ENCODE measurements at regions of chr12 and their contacts with region 1.

Region 1: DNA sequence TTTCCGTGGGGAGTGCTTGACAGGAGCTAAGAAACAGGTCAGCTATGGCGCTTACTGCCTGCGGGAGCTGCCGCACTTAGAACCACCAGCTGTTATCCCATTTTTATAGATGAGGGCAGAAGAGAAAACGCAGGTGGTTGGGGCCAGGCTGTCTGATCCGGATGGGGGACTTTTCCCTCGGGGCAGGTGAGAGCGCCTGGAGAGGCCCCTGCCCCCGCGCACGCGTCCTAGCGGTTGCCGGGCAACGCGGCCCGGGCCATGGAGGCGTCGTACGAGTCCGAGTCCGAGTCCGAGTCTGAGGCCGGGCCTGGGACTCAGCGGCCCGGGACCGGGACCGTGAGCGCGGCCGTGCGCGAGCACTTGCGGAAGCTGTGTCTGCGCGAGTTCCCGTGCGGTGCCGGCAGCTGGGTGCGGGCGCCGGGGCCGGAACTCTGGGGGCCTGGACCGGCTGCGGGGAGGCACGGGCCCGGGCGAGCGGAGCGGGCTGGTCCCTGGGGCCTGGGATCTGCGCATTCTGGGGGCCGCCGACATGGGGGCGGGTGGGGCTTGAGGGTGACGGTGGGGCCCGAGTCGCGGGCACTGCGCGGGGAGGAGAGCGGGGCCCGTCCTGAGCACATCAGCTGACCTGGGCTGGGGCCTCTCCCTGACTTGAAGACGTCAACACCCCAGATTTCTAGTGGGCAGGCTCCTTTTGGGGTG is at the start of gene LRRC43:
- DNase-seq: peak; percentile 42
- ATAC-seq: peak; percentile 65
- H3K4me3 Mint-ChIP-seq: peak within 1 kb of the TSS; percentile 68
- H3K27ac Mint-ChIP-seq: no peak within 1 kb of the TSS
- H3K4me1 Mint-ChIP-seq: peaks cover 10% of the 10 kb centered on the region
- H3K27me3 Mint-ChIP-seq: peaks cover 9% of the 10 kb centered on the region
- CTCF ChIP-seq: no peak
- total RNA-seq, gene LRRC43: not detected

Region 2: DNA sequence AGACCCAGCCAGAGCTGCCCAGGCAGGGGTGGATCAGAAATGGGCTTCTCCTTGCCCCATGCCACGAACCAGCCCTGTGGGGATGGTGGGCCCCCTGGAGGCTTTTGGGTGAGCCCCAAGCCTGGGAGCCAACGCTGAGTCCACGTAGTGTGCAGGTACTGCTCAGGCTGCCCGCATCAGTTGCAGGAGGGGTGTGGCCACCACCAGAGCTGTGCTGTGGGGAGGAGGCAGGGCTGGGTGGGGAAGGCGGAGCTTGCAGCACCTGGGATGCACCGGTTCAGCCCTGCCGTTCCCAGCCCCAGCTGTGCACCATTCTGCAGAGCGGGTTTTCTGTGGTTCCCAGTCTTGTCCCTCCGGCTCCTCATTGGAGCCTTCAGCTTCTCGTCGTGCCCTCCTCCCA is 45.4 kb before region 1 on chr12:
- CTCF ChIA-PET with region 1: no interaction called
- POLR2A ChIA-PET with region 1: no interaction called
- intact Hi-C with region 1: loop called (anchors 10 kb)
- DNase-seq: no peak
- ATAC-seq: peak; percentile 49
- H3K4me3 Mint-ChIP-seq: no peak overlapping the region
- H3K27ac Mint-ChIP-seq: no peak overlapping the region
- H3K4me1 Mint-ChIP-seq: no peaks in the 10 kb centered on the region
- H3K27me3 Mint-ChIP-seq: no peaks in the 10 kb centered on the region
- CTCF ChIP-seq: no peak